ENCODE measurements at regions of chr19 and their contacts with region 1.

Region 1: DNA sequence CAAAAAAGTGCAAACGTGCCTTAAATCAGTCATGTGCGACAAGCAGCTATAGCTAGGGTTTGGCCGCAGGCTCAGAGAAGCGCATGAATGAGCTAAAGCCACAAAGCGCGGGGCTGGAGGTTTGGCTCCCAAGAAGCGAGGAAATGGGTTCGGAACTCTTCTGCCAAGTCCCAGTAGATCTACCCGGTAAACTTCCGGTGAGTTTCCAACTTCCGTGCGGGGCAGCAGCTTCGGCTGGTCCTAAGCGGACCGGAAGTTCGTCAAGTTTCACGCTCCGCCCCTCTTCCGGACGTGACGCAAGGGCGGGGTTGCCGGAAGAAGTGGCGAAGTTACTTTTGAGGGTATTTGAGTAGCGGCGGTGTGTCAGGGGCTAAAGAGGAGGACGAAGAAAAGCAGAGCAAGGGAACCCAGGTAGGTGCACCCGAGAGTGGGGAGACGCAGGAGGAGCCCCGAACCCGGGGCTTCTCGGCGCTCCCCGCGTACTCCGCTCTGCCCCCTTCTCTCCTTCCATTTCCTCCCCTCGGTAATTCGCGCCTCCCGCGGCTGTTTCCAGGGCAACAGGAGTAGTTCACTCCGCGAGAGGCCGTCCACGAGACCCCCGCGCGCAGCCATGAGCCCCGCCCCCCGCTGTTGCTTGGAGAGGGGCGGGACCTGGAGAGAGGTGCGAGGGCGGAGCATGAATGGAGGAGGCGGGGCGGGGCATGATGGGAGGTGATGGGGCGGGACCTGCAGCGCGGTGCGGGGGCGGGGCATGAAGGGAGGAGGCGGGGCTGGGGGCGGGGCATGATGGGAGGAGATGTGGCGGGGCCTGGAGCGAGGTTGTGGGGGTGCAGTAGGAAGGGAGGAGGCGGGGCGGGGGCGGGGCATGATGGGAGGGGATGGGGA is at the start of gene NR1H2:
- DNase-seq: peak; percentile 94 to 97 (median 96)
- H3K4me3 ChIP-seq: peak within 1 kb of the TSS; percentile 73 to 100 (median 98)
- H3K27ac ChIP-seq: peak within 1 kb of the TSS; percentile 86 to 100 (median 97)
- H3K27me3 ChIP-seq: no peaks in the 10 kb centered on the region
- CTCF ChIP-seq: peak in 36 of 56 donors; percentile 3 to 57 (median 32)
- total RNA-seq, gene NR1H2: 47.4 to 83.8 (median 64.3) TPM

Region 2: DNA sequence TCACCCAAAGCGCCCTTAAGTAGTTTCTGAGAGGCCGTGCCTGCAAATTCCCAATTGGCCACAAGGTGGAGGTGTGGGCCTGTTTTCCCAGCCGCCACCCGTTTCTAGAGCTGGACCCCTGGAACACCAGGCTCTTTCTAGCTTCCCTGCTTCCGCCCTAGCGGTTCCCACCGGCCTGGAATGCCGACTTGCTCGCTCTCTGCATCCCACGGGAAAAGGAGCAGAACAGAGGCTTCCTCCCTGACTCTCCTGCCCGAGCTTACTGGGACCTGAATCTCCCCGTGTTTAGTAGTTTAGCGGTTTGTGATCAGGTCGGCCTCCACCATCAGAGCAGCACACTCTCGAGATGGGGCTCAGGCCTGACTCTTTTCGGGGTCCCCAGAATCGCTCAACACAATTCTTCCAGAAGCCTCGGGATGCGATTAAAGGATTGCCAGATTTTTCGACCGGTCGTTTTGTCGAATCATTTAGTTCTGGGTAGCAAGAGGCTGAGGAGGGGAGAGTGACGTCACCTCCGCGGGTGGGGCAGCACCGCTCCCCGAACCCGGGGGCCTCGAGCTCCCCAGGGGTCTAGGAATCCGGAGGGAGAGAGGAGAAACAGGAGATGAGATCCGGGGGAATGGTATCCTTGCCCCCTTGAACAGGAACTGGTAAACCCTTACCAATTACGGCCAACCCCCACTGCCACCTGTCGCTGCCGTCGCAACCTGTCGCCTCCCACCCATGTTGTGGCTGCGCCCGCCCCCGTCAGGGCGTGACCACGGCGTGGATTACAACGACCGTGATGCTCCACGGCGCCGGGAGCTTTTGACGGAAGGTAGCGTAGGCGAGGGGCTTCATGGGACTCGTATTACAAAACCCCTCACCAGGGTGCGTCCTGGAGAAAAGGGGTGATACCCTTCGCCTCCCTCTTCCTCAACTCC is 19.0 kb before region 1 on chr19:
- intact Hi-C with region 1: no loop called
- DNase-seq: peak; percentile 75 to 92 (median 86)
- H3K4me3 ChIP-seq: peak overlapping the region; percentile 38 to 78 (median 64)
- H3K27ac ChIP-seq: peak overlapping the region; percentile 32 to 97 (median 90)
- H3K27me3 ChIP-seq: no peaks in the 10 kb centered on the region
- CTCF ChIP-seq: peak; percentile 75 to 96 (median 90)

Region 3: DNA sequence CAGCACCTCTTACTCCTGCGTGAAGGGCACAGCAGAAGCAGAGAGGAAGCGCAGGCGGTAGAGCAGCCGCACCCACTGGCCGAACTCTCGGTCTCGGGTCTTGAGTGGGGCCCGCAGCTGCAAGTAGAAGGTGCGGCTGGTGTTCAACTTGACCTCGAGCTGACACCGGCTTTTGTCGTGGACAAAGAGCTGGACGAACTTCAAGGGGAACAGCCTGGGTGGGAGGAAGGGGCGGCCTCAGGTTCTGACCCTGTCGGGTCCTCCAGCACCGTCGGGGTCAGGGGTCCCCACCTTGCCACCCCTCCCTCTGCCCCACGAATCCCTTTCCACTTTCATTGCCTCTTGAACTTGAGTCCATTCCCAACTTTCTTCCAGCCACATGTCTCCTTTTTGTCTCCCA is 91.2 kb after region 1 on chr19:
- intact Hi-C with region 1: no loop called
- DNase-seq: no peak
- H3K4me3 ChIP-seq: no peak overlapping the region
- H3K27ac ChIP-seq: no peak overlapping the region
- H3K27me3 ChIP-seq: no peaks in the 10 kb centered on the region
- CTCF ChIP-seq: no peak

Region 4: DNA sequence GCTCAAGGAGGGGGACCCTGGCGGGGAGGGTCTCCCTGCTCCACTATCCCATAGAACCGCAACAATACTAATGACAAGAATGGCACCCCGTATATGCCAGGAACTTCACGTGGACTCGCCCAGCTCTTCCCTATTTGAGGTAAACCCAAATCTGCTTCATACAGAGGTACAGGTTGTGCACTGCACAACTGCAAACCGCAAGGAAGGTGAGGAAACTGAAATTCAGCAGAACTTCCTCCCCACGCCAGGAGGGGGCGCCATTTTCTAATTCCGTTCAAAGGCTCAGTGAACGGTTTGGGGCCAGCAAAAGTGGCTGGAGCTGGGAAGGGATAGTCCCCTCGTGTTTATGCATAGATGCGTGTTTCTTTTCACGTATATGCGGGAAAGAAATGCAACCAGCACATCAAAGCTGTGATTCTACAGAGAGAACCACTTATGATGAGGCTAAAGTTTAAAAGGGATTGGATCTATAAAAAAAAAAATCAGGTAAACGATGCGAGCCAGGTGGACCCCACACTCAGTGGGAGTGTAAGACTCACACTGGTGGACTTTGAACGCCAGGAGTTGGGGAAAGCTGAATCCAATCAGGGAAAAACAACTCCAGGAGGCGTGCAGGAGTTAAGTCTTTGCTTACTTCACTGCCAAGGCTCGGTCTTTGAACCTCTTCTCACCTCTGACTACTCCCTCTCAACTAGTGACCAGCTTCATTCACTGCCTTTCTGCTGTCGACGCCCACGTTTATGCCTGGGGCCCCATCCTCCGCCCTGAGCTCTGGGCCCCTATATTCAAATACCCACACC is 293.1 kb after region 1 on chr19:
- intact Hi-C with region 1: loop called in 1 of 2 experiments (anchors 10 kb)
- DNase-seq: peak in 7 of 10 donors; percentile 35 to 68 (median 56)
- H3K4me3 ChIP-seq: no peak overlapping the region
- H3K27ac ChIP-seq: peak overlapping the region in 3 of 59 donors; percentile 5 to 35 (median 9)
- H3K27me3 ChIP-seq: peaks cover 0 to 47% (median 21%) of the 10 kb centered on the region in 45 donors
- CTCF ChIP-seq: peak; percentile 66 to 88 (median 79)